ENCODE measurements at regions of chr3 and their contacts with region 1.

Region 1: GRCh38 chr3:107627962-107628542 is 105.3 kb downstream of the BBX start:
- DNase-seq: no peak
- ATAC-seq: no peak
- H3K4me3 Mint-ChIP-seq: no peak overlapping the region
- H3K27ac Mint-ChIP-seq: no peak overlapping the region
- H3K4me1 Mint-ChIP-seq: peaks cover 31% of the 10 kb centered on the region
- H3K27me3 Mint-ChIP-seq: no peaks in the 10 kb centered on the region

Region 2: GRCh38 chr3:107562969-107563529 is 65.0 kb before region 1 on chr3:
- CTCF ChIA-PET with region 1: no interaction called
- POLR2A ChIA-PET with region 1: no interaction called
- intact Hi-C with region 1: loop called in 1 of 2 experiments (anchors 10 kb)
- DNase-seq: no peak
- ATAC-seq: no peak
- H3K4me3 Mint-ChIP-seq: no peak overlapping the region
- H3K27ac Mint-ChIP-seq: no peak overlapping the region
- H3K4me1 Mint-ChIP-seq: peaks cover 42% of the 10 kb centered on the region
- H3K27me3 Mint-ChIP-seq: no peaks in the 10 kb centered on the region

Region 3: DNA sequence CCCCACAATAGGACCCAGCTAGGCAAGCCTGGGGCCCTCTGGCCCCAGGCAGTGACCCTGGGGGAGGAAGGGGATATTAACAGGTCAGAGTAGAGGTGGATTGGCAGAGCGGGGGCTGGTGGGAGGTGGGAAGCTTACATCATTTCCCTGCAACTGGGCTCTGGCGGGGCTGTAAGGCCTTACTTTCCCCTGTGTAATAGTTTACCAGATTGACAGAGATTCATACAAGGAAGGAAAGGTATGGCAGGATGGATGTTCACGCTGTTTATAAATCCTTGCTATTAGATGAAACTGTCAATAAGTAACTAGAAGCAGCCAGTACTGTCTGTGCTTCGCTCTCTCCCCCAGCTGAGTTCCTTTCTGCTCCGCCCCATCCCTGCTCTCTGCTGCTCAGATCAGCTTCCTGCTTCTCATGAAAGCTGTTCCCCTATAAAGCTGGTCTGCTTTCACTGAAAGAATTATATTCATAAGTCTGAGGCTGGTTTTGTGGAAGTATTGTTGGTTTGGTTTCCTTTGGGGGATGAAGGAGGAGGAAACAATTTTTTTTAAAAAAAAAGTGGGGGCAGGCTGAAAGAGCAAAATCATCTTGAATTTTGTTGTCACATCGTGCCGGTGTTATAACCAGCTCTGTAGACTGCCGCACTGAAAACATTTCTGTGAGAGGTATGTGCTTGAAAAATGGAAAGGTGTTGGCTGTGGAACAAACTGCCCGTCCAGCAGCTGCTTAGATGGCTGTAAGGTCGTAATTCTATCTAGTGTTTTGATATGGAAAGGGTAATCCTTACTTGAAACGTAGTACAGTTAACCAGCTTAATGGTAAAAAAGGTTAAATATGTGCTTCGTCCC is 28.9 kb before region 1 on chr3:
- CTCF ChIA-PET with region 1: interaction called, 12 read pairs
- POLR2A ChIA-PET with region 1: no interaction called
- intact Hi-C with region 1: no loop called
- DNase-seq: peak; percentile 68
- ATAC-seq: peak; percentile 88
- H3K4me3 Mint-ChIP-seq: peak overlapping the region; percentile 91
- H3K27ac Mint-ChIP-seq: peak overlapping the region; percentile 99
- H3K4me1 Mint-ChIP-seq: peaks cover 55% of the 10 kb centered on the region
- H3K27me3 Mint-ChIP-seq: no peaks in the 10 kb centered on the region